Caco-2 (cell line): ENCODE measurements at regions of chr6 and their contacts with region 1.

Region 1: GRCh38 chr6:43506667-43507471 is 3.3 kb downstream of the LRRC73 start:
- DNase-seq: peak; percentile 70 to 84
- H3K4me3 ChIP-seq: no peak overlapping the region
- H3K4me3 Mint-ChIP-seq: no peak overlapping the region
- H3K27ac Mint-ChIP-seq: no peak overlapping the region
- H3K4me1 ChIP-seq: peaks cover 10% of the 10 kb centered on the region; the same call in 1 of the 2 replicates
- H3K4me1 Mint-ChIP-seq: peaks cover 7% of the 10 kb centered on the region
- H3K27me3 ChIP-seq: no peaks in the 10 kb centered on the region
- H3K27me3 Mint-ChIP-seq: peaks cover 6% of the 10 kb centered on the region
- CTCF ChIP-seq: peak; percentile 88

Region 2: DNA sequence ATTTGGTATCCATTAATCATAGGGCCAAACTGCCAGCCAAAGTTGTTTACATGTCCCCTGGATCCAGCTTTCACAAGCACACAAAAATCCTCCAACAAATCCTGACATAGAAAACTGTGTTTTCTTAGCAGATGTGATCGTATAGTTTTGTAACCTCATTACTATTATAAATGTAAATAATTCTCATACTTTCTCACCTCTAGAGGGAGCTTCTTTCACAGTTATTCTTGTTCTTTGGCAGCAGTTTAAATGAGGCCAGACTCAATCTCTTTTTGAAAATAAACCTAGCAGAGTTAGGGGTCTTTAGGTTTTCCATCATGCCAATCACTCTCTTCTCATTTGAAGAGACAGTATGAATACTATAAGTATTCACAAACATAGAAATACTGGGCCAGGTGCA is 120.4 kb before region 1 on chr6:
- CTCF ChIA-PET with region 1: interaction called, 20 read pairs
- POLR2A ChIA-PET with region 1: no interaction called
- intact Hi-C with region 1: loop called (anchors 1 kb)
- DNase-seq: no peak
- H3K4me3 ChIP-seq: no peak overlapping the region
- H3K4me3 Mint-ChIP-seq: no peak overlapping the region
- H3K27ac Mint-ChIP-seq: no peak overlapping the region
- H3K4me1 ChIP-seq: peaks cover 23% of the 10 kb centered on the region
- H3K4me1 Mint-ChIP-seq: peaks cover 18% of the 10 kb centered on the region
- H3K27me3 ChIP-seq: no peaks in the 10 kb centered on the region
- H3K27me3 Mint-ChIP-seq: no peaks in the 10 kb centered on the region
- CTCF ChIP-seq: peak; percentile 15 to 54

Region 3: GRCh38 chr6:43391440-43392031 is 115.3 kb before region 1 on chr6:
- CTCF ChIA-PET with region 1: interaction called, 20 read pairs
- POLR2A ChIA-PET with region 1: no interaction called
- intact Hi-C with region 1: loop called (anchors 1 kb)
- DNase-seq: no peak
- H3K4me3 ChIP-seq: no peak overlapping the region
- H3K4me3 Mint-ChIP-seq: no peak overlapping the region
- H3K27ac Mint-ChIP-seq: peak overlapping the region; percentile 72
- H3K4me1 ChIP-seq: peaks cover 50% of the 10 kb centered on the region
- H3K4me1 Mint-ChIP-seq: peaks cover 60% of the 10 kb centered on the region
- H3K27me3 ChIP-seq: no peaks in the 10 kb centered on the region
- H3K27me3 Mint-ChIP-seq: no peaks in the 10 kb centered on the region
- CTCF ChIP-seq: no peak

Region 4: GRCh38 chr6:43454696-43455530 is 52.0 kb before region 1 on chr6:
- CTCF ChIA-PET with region 1: interaction called, 12 read pairs
- POLR2A ChIA-PET with region 1: no interaction called
- intact Hi-C with region 1: loop called (anchors 1 kb)
- DNase-seq: peak; percentile 78 to 89
- H3K4me3 ChIP-seq: peak overlapping the region; percentile 62
- H3K4me3 Mint-ChIP-seq: peak overlapping the region; percentile 78
- H3K27ac Mint-ChIP-seq: no peak overlapping the region
- H3K4me1 ChIP-seq: peaks cover 7% of the 10 kb centered on the region; the same call in 1 of the 2 replicates
- H3K4me1 Mint-ChIP-seq: no peaks in the 10 kb centered on the region
- H3K27me3 ChIP-seq: no peaks in the 10 kb centered on the region
- H3K27me3 Mint-ChIP-seq: no peaks in the 10 kb centered on the region
- CTCF ChIP-seq: no peak

Region 5: DNA sequence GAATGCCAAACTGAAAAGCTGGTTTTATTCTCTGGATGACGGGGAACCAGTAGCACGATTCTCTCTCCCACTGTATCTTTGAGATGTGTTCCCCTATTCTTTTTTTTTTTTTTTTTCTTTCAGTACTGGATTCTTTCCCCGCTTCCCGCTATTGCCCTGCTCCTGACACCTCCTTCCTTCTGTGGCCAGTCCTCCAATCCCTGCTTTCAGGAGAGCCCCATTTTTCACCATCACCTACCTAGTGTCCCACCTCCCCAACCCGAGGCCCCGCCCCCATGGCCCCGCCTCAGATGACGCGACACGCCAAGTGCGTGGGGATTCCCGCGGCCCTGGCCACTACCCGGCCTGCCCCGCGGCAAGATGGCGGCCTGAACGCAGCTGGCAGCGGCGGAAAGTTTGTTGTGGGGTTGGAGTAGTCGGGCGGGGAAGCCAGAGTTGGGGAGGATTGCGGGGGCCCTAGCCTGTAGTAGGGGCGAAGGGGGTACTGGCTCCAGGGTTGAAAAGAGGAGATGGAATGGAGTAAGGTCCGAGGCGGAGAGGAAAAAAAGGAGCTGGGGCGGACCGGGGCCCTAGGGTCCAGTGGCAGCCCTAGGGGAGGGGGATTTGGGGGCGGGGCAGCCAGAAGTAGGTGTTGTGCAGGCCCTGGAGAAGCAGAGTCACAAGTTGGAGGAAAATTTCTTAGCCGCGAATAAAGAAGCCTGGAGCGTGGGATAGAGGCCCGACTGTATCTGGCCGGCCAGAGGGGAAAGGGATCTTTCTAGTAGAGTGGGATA is 29.4 kb before region 1 on chr6 and contains the start of gene TJAP1:
- CTCF ChIA-PET with region 1: interaction called, 12 read pairs
- POLR2A ChIA-PET with region 1: no interaction called
- intact Hi-C with region 1: no loop called
- DNase-seq: peak; percentile 93 to 96
- H3K4me3 ChIP-seq: peak within 1 kb of the TSS; percentile 68
- H3K4me3 Mint-ChIP-seq: peak within 1 kb of the TSS; percentile 97
- H3K27ac Mint-ChIP-seq: peak within 1 kb of the TSS; percentile 97
- H3K4me1 ChIP-seq: peaks cover 17% of the 10 kb centered on the region; the same call in 1 of the 2 replicates
- H3K4me1 Mint-ChIP-seq: peaks cover 25% of the 10 kb centered on the region
- H3K27me3 ChIP-seq: no peaks in the 10 kb centered on the region
- H3K27me3 Mint-ChIP-seq: no peaks in the 10 kb centered on the region
- CTCF ChIP-seq: no peak
- total RNA-seq, gene TJAP1: 34.0 and 39.4 TPM in 2 replicates

Region 6: DNA sequence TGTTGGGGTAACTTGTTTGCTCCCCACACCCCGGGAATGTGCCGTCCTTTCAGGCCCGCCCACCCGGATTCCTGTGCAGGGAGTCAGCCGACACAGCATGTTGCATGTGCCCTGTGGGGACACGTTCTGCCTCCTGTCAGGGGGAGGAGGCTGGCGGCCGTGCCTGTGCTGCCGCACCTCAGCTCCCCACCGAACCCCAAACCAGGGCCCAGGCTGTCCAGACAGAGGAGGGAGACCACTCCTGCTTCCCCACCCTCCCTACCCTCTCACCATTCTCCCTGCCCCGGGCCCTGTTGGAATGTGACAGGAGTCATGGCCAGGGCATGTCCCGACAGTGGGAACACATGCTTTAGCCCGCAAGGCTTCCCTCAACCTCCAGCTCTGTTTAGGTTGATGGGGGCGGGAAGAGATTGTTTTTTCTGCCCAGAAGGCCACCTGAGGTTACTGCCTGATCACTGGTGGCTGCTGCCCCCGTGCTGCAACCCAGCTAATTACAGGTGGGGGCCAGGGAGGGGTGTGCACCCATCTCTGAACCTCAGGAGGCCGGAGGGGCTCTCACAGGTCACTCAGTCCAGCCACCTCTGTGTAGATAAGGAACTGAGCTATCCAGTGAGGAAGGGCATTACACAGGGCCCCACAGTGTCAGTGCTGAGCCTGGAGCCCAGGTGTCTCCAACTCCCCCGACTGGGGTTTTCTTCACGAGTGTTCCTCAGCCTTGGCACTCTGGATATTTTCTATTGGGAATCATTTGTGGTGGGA is 10.3 kb before region 1 on chr6:
- CTCF ChIA-PET with region 1: interaction called, 10 read pairs
- POLR2A ChIA-PET with region 1: interaction called, 3 read pairs
- intact Hi-C with region 1: no loop called
- DNase-seq: peak; percentile 66 to 73
- H3K4me3 ChIP-seq: no peak overlapping the region
- H3K4me3 Mint-ChIP-seq: no peak overlapping the region
- H3K27ac Mint-ChIP-seq: no peak overlapping the region
- H3K4me1 ChIP-seq: peaks cover 37% of the 10 kb centered on the region
- H3K4me1 Mint-ChIP-seq: peaks cover 20% of the 10 kb centered on the region
- H3K27me3 ChIP-seq: no peaks in the 10 kb centered on the region
- H3K27me3 Mint-ChIP-seq: no peaks in the 10 kb centered on the region
- CTCF ChIP-seq: peak; percentile 49 to 70

Region 7: GRCh38 chr6:43532201-43532600 is 25.3 kb after region 1 on chr6:
- CTCF ChIA-PET with region 1: no interaction called
- POLR2A ChIA-PET with region 1: no interaction called
- intact Hi-C with region 1: no loop called
- DNase-seq: no peak
- H3K4me3 ChIP-seq: no peak overlapping the region
- H3K4me3 Mint-ChIP-seq: no peak overlapping the region
- H3K27ac Mint-ChIP-seq: no peak overlapping the region
- H3K4me1 ChIP-seq: no peaks in the 10 kb centered on the region
- H3K4me1 Mint-ChIP-seq: no peaks in the 10 kb centered on the region
- H3K27me3 ChIP-seq: no peaks in the 10 kb centered on the region
- H3K27me3 Mint-ChIP-seq: no peaks in the 10 kb centered on the region
- CTCF ChIP-seq: no peak

Region 8: GRCh38 chr6:44630125-44631028 is 1123.5 kb after region 1 on chr6:
- CTCF ChIA-PET with region 1: no interaction called
- POLR2A ChIA-PET with region 1: no interaction called
- intact Hi-C with region 1: no loop called
- DNase-seq: peak; percentile 55 to 60
- H3K4me3 ChIP-seq: no peak overlapping the region
- H3K4me3 Mint-ChIP-seq: no peak overlapping the region
- H3K27ac Mint-ChIP-seq: no peak overlapping the region
- H3K4me1 ChIP-seq: no peaks in the 10 kb centered on the region
- H3K4me1 Mint-ChIP-seq: peaks cover 9% of the 10 kb centered on the region
- H3K27me3 ChIP-seq: no peaks in the 10 kb centered on the region; the same call in 1 of the 2 replicates
- H3K27me3 Mint-ChIP-seq: peaks cover 11% of the 10 kb centered on the region
- CTCF ChIP-seq: peak; percentile 33 to 83